ENCODE measurements at regions of chr2 and their contacts with region 1.

Region 1: GRCh38 chr2:227774011-227774624 is 28.4 kb downstream of the SCYGR8 start:
- DNase-seq: no peak
- H3K4me3 Mint-ChIP-seq: no peak overlapping the region
- H3K27ac Mint-ChIP-seq: no peak overlapping the region
- H3K4me1 Mint-ChIP-seq: peaks cover 10% of the 10 kb centered on the region
- H3K27me3 Mint-ChIP-seq: no peaks in the 10 kb centered on the region

Region 2: GRCh38 chr2:227671170-227672060 is 102.7 kb before region 1 on chr2:
- intact Hi-C with region 1: no loop called
- DNase-seq: no peak
- H3K4me3 Mint-ChIP-seq: no peak overlapping the region
- H3K27ac Mint-ChIP-seq: no peak overlapping the region
- H3K4me1 Mint-ChIP-seq: no peaks in the 10 kb centered on the region
- H3K27me3 Mint-ChIP-seq: peaks cover 5% of the 10 kb centered on the region

Region 3: GRCh38 chr2:227862227-227862740 is 88.2 kb after region 1 on chr2:
- intact Hi-C with region 1: loop called (anchors 1 kb)
- DNase-seq: no peak
- H3K4me3 Mint-ChIP-seq: no peak overlapping the region
- H3K27ac Mint-ChIP-seq: no peak overlapping the region
- H3K4me1 Mint-ChIP-seq: no peaks in the 10 kb centered on the region
- H3K27me3 Mint-ChIP-seq: peaks cover 4% of the 10 kb centered on the region